Activated B cell treated with CpG ODN at 0.5 μM for 24 hours (primary cell): ENCODE measurements at regions of chr6 and their contacts with region 1.

Region 1: DNA sequence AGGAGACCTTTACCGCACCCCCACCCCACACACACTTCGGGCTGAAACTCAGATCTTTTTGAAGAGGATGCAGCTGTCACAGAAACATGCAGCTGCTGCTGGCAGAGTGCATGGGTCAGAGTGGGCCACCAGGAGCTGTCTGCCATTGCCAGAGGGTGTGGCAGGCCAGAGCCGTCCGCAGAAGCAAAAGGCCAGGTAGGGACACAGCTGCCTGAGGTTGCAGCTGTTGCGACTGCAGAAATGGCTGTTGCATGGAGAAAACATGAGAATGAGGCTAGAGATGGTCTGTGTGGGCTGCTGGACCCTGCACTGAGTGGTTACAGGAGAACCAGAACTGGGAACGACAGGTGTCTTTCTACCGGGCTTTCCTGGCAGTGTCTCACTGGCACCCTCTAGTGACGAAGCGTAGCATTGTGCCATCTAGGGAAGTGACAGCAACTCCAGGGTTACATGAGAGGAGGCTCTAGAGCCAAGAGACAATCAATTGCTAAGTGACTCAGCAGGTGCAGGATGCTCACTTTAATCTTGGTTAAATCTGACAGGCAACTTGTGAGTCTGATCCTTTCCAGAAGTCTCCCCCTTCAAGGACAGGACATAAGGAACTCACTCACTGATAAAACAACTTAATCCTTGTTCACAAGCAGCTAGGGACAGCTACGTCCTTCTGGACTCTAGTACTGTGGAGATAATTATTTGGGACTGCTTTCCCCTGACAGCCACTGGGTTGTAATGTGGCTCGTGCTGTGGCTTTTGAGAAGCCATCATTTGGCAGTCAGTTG is 29.1 kb upstream of the SERPINB9 start:
- DNase-seq: peak; percentile 72
- ATAC-seq: peak; percentile 97
- H3K4me3 Mint-ChIP-seq: peak overlapping the region; percentile 73
- H3K27ac Mint-ChIP-seq: no peak overlapping the region
- H3K4me1 Mint-ChIP-seq: peaks cover 18% of the 10 kb centered on the region
- H3K27me3 Mint-ChIP-seq: no peaks in the 10 kb centered on the region
- CTCF ChIP-seq: peak; percentile 64

Region 2: GRCh38 chr6:2738373-2738979 is 193.7 kb before region 1 on chr6:
- CTCF ChIA-PET with region 1: interaction called, 5 read pairs
- POLR2A ChIA-PET with region 1: no interaction called
- intact Hi-C with region 1: loop called (anchors 1 kb)
- DNase-seq: no peak
- ATAC-seq: no peak
- H3K4me3 Mint-ChIP-seq: no peak overlapping the region
- H3K27ac Mint-ChIP-seq: no peak overlapping the region
- H3K4me1 Mint-ChIP-seq: peaks cover 10% of the 10 kb centered on the region
- H3K27me3 Mint-ChIP-seq: no peaks in the 10 kb centered on the region
- CTCF ChIP-seq: no peak

Region 3: GRCh38 chr6:2848851-2849250 is 83.3 kb before region 1 on chr6:
- CTCF ChIA-PET with region 1: interaction called, 177 read pairs
- POLR2A ChIA-PET with region 1: interaction called, 32 read pairs
- intact Hi-C with region 1: loop called (anchors 1 kb)
- DNase-seq: no peak
- ATAC-seq: peak; percentile 65
- H3K4me3 Mint-ChIP-seq: peak overlapping the region; percentile 33
- H3K27ac Mint-ChIP-seq: peak overlapping the region; percentile 83
- H3K4me1 Mint-ChIP-seq: peaks cover 59% of the 10 kb centered on the region
- H3K27me3 Mint-ChIP-seq: no peaks in the 10 kb centered on the region
- CTCF ChIP-seq: no peak

Region 4: DNA sequence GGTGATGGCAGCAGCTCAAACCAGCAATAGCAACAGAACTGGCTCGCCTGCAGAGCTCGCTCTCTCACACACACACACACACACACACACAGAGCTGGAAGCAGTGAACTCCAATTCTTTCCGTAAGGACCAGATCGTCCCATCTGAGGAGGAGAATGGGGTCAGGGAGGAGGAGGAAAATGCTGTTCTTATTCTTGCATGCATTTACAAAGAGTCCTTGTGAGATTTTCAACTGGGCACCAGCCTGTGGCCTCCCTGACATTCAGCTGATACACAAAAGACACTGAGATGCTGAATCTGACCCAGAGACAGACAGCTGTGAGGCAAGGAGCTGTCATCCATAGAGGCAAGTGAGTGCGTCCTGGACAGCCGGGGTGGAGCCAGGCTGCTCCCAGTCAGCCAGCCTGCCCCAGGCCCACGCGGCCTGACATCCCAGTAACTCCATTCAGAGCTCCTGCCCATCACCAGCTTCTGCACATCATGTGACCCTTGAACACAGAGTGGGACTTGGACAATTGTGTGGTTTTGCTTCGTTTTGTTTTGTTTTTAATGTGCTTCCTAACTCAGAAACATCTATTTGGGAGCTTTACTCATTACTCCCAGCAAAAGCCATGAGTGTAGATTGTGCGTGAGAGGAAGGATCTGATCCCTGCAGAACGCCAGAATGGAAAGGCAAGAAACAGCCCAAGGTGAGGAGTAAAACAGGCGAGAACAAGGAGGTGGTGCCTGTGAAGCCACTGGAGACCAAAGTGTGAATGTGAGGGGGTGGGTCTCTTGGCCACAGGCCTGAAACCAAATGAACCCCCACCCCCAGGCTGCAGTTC is 31.1 kb before region 1 on chr6:
- CTCF ChIA-PET with region 1: interaction called, 14 read pairs
- POLR2A ChIA-PET with region 1: interaction called, 12 read pairs
- intact Hi-C with region 1: loop called (anchors 1 kb)
- DNase-seq: no peak
- ATAC-seq: no peak
- H3K4me3 Mint-ChIP-seq: peak overlapping the region; percentile 98
- H3K27ac Mint-ChIP-seq: peak overlapping the region; percentile 93
- H3K4me1 Mint-ChIP-seq: peaks cover 61% of the 10 kb centered on the region
- H3K27me3 Mint-ChIP-seq: no peaks in the 10 kb centered on the region
- CTCF ChIP-seq: no peak

Region 5: DNA sequence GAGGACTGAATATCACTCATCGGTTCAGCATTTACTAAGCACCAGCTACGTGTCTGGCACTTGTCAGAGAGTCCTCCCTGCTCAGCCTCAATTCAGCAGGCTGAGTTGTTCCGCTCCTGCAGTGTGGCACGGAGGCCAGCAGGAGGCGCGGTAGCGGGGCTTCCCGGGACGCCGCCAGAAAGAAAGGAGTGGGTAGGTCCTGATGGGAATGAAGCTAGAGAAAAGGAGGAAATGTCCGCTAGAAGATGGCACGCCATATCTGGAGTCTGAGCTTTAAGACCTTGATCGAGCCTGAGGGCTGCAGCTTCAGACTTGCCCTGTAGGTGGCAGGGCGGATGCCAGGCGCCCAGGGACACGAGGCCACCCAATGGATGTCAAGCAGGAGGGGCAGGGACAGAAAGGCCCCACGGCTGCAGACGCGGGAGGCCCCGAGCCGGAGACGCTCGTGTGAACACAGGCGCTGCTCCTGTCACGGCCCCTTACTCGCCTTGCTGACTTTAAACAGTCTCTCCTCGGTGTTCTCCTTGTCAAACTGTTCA is 20.5 kb after region 1 on chr6:
- CTCF ChIA-PET with region 1: interaction called, 9 read pairs
- POLR2A ChIA-PET with region 1: no interaction called
- intact Hi-C with region 1: loop called (anchors 2 kb)
- DNase-seq: peak; percentile 41
- ATAC-seq: peak; percentile 95
- H3K4me3 Mint-ChIP-seq: peak overlapping the region; percentile 75
- H3K27ac Mint-ChIP-seq: peak overlapping the region; percentile 79
- H3K4me1 Mint-ChIP-seq: peaks cover 17% of the 10 kb centered on the region
- H3K27me3 Mint-ChIP-seq: no peaks in the 10 kb centered on the region
- CTCF ChIP-seq: no peak

Region 6: GRCh38 chr6:3052481-3053230 is 120.5 kb after region 1 on chr6:
- CTCF ChIA-PET with region 1: interaction called, 3 read pairs
- POLR2A ChIA-PET with region 1: interaction called, 4 read pairs
- intact Hi-C with region 1: loop called (anchors 2 kb)
- DNase-seq: no peak
- ATAC-seq: no peak
- H3K4me3 Mint-ChIP-seq: peak overlapping the region; percentile 76
- H3K27ac Mint-ChIP-seq: no peak overlapping the region
- H3K4me1 Mint-ChIP-seq: peaks cover 14% of the 10 kb centered on the region
- H3K27me3 Mint-ChIP-seq: peaks cover 9% of the 10 kb centered on the region
- CTCF ChIP-seq: no peak